Mammary epithelial cell (primary cell): ENCODE measurements at regions of chr2 and their contacts with region 1.

Region 1: DNA sequence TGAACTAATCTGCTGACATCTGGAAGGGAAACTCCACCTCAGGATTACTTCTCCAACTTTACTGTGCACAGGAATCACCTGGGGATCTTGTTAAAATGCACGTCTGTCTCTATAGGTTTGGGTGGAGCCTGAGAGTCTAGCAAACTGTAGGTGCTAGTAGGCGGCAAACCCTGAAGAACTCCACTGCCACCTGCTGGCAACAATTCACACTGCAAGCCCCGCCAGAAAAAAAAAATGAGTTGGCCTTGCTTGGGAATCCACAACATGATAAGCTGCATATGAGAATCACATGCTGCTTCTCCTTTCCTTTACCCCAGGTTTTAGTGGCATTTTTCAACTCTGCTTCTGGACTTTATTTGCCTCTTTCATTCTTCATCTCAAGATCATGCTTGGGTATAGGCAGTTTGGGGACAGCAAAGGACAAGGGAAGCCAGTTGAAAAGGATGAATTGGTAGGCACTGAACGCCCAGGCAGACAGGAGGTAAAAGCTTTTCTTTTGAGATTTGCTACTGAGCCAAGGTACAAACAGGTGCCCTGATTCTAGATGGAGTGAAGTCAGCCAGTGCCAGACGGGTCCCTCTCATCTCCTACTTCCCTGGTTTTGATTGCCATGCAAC is 88.8 kb downstream of the VIT start:
- DNase-seq: peak; percentile 66
- H3K4me3 ChIP-seq: no peak overlapping the region
- H3K27ac ChIP-seq: no peak overlapping the region
- H3K4me1 ChIP-seq: no peaks in the 10 kb centered on the region
- H3K27me3 ChIP-seq: no peaks in the 10 kb centered on the region
- CTCF ChIP-seq: peak; percentile 96

Region 2: DNA sequence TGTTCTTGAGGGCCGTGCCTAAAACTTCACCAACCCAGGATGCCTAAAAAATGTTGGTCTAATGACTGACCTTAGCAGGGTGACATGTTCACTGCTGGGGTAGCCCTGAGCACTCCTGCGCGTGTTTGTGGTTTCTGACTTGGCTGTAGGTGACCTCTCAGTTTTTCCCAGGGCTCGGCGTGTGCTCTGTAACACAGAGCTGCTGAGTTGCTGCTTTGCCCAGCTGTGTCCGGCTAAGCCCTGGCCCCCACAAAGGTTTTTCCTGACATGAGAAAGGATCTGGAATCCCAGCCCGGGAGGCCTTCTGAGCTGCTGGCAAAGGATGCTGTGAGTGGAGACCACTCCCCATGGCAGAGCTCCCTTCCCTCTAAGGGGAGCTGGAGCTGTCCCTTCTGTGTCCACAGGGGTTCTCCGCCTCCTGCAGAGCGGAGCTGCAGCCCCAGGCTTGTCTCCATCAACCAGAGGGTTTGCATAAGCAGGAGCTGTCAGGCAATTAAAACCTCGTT is 377.0 kb before region 1 on chr2:
- CTCF ChIA-PET with region 1: no interaction called
- dilution Hi-C with region 1: no loop called
- in situ Hi-C with region 1: no loop called
- intact Hi-C with region 1: no loop called
- DNase-seq: peak; percentile 53
- H3K4me3 ChIP-seq: no peak overlapping the region
- H3K27ac ChIP-seq: peak overlapping the region; percentile 21
- H3K4me1 ChIP-seq: peaks cover 35% of the 10 kb centered on the region
- H3K27me3 ChIP-seq: no peaks in the 10 kb centered on the region
- CTCF ChIP-seq: no peak

Region 3: GRCh38 chr2:36486546-36487044 is 298.7 kb before region 1 on chr2:
- CTCF ChIA-PET with region 1: no interaction called
- dilution Hi-C with region 1: no loop called
- in situ Hi-C with region 1: no loop called
- intact Hi-C with region 1: no loop called
- DNase-seq: peak; percentile 16
- H3K4me3 ChIP-seq: no peak overlapping the region
- H3K27ac ChIP-seq: peak overlapping the region; percentile 64
- H3K4me1 ChIP-seq: peaks cover 51% of the 10 kb centered on the region
- H3K27me3 ChIP-seq: no peaks in the 10 kb centered on the region
- CTCF ChIP-seq: no peak

Region 4: DNA sequence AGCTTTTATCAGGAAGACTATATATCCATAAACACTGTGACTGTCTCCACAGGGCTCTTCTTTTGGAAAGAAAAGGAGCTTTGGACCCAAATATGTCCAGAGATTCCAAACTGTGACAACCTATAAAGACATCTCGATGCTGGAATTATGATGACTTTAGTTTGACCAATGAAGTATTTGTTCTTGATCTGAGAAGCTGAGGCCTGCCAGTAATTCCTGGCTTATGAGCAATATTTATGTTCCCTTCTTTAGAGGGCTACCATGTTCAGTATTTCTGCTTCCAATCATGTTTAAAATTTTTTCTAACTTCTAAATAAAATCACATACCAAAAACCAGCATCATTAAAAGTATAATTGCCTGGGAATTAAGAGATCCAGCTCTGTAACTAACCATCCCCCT is 228.4 kb before region 1 on chr2:
- CTCF ChIA-PET with region 1: no interaction called
- dilution Hi-C with region 1: no loop called
- in situ Hi-C with region 1: no loop called
- intact Hi-C with region 1: loop called (anchors 10 kb)
- DNase-seq: no peak
- H3K4me3 ChIP-seq: no peak overlapping the region
- H3K27ac ChIP-seq: no peak overlapping the region
- H3K4me1 ChIP-seq: peaks cover 14% of the 10 kb centered on the region
- H3K27me3 ChIP-seq: no peaks in the 10 kb centered on the region
- CTCF ChIP-seq: no peak

Region 5: DNA sequence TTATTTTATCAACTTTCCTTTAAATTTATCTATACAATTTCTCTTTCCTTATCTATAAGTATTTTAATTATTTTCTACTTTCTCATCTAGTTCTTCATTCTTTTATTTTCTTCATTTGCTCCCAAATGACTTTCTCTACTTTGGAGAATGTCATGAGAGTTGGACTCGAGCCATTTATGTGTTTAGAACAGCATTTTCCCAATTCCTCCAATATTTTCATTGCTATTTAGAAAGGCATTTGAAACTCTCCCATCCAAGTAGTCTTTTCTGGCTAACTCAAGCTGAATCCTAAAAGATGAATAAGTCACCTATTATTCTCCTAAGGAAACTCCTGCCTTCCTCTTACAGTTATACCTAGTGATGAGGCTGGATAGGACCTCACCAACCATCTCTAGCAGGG is 171.5 kb before region 1 on chr2:
- CTCF ChIA-PET with region 1: no interaction called
- dilution Hi-C with region 1: no loop called
- in situ Hi-C with region 1: no loop called
- intact Hi-C with region 1: no loop called
- DNase-seq: no peak
- H3K4me3 ChIP-seq: no peak overlapping the region
- H3K27ac ChIP-seq: no peak overlapping the region
- H3K4me1 ChIP-seq: no peaks in the 10 kb centered on the region
- H3K27me3 ChIP-seq: no peaks in the 10 kb centered on the region
- CTCF ChIP-seq: no peak

Region 6: GRCh38 chr2:36831185-36831584 is 45.9 kb after region 1 on chr2:
- CTCF ChIA-PET with region 1: no interaction called
- dilution Hi-C with region 1: no loop called
- in situ Hi-C with region 1: no loop called
- intact Hi-C with region 1: no loop called
- DNase-seq: no peak
- H3K4me3 ChIP-seq: no peak overlapping the region
- H3K27ac ChIP-seq: no peak overlapping the region
- H3K4me1 ChIP-seq: no peaks in the 10 kb centered on the region
- H3K27me3 ChIP-seq: no peaks in the 10 kb centered on the region
- CTCF ChIP-seq: no peak

Region 7: GRCh38 chr2:36918307-36918706 is 133.0 kb after region 1 on chr2:
- CTCF ChIA-PET with region 1: no interaction called
- dilution Hi-C with region 1: no loop called
- in situ Hi-C with region 1: loop called in 1 of 2 experiments (anchors 10 kb)
- intact Hi-C with region 1: loop called (anchors 1 kb)
- DNase-seq: no peak
- H3K4me3 ChIP-seq: no peak overlapping the region
- H3K27ac ChIP-seq: no peak overlapping the region
- H3K4me1 ChIP-seq: no peaks in the 10 kb centered on the region
- H3K27me3 ChIP-seq: no peaks in the 10 kb centered on the region
- CTCF ChIP-seq: peak in 1 of 2 donors; percentile 25

Region 8: DNA sequence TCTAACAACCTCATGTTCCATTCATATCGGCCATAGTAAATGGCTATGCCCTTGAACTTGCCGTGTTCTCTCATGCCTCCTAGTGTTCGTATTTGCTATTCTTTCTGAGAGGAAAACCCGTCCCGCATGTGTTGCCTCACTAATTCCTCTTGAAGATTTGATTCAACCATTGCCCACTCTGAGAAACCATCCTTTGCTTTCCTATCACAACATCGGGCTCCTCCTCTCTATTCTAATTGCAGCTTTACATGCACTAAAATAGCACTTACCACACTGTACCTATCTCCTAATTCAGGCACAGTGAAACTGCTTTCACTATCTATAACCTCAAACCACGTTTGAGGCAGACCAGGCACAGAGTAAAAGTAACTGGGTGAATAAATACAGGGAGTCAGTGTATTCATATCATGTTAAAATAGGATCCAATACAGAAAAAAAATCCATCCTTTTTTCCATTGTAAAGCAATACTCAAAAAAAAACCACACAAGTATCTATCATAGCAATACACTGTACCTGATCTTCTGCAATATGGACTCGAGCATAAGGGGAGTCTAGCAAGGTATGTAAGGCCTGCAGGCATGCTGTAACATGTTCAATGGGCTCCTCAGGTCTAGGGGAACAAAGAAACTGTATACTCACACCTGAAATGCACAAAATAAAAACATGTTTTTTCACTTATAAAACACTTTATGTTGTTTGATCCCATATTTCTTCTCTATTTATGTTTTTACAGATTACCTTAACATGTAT is 220.0 kb after region 1 on chr2:
- CTCF ChIA-PET with region 1: no interaction called
- dilution Hi-C with region 1: no loop called
- in situ Hi-C with region 1: loop called in 1 of 2 experiments (anchors 25 kb)
- intact Hi-C with region 1: loop called (anchors 1 kb)
- DNase-seq: peak; percentile 18
- H3K4me3 ChIP-seq: no peak overlapping the region
- H3K27ac ChIP-seq: peak overlapping the region; percentile 6
- H3K4me1 ChIP-seq: peaks cover 6% of the 10 kb centered on the region
- H3K27me3 ChIP-seq: no peaks in the 10 kb centered on the region
- CTCF ChIP-seq: peak; percentile 44 to 60